ENCODE measurements at regions of chr5 and their contacts with region 1.

Region 1: DNA sequence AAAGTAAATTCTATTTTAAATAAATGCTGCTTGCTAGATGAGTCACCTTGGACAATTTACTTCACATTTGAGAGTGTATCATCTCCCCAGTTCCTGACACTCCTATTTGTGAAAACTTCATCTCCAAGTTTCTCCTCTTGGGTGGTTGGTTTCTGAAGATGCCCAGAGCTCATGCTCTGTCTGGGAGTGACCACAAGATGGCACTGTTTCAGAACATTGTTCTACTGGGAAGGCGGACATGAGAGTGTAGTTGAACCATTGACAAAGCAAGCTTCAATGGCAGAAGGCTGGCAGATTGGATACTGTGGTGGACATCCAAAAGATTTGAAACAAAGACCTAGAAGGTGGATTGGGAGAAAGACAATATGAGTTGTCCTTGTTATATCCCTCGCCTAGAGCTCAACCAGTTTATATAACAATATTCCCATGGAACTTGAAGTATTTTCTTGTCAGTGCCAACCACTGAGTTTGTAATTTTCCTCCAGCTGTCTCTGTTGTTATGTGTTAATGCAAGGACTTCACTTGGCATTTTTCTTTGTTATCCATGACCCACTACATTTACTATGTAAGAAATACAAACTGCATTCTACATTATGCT is 234.3 kb upstream of the ANKH start:
- DNase-seq: no peak
- H3K4me3 ChIP-seq: no peak overlapping the region
- H3K27ac ChIP-seq: no peak overlapping the region
- H3K27me3 ChIP-seq: no peaks in the 10 kb centered on the region
- CTCF ChIP-seq: peak; percentile 82

Region 2: GRCh38 chr5:14706615-14707021 is 399.3 kb before region 1 on chr5:
- CTCF ChIA-PET with region 1: no interaction called
- POLR2A ChIA-PET with region 1: no interaction called
- DNase-seq: no peak
- H3K4me3 ChIP-seq: no peak overlapping the region
- H3K27ac ChIP-seq: peak overlapping the region; percentile 47
- H3K27me3 ChIP-seq: no peaks in the 10 kb centered on the region
- CTCF ChIP-seq: no peak

Region 3: GRCh38 chr5:15117688-15118087 is 11.8 kb after region 1 on chr5:
- CTCF ChIA-PET with region 1: interaction called, 11 read pairs
- POLR2A ChIA-PET with region 1: no interaction called
- DNase-seq: no peak
- H3K4me3 ChIP-seq: no peak overlapping the region
- H3K27ac ChIP-seq: no peak overlapping the region
- H3K27me3 ChIP-seq: no peaks in the 10 kb centered on the region
- CTCF ChIP-seq: no peak

Region 4: GRCh38 chr5:15290953-15291352 is 185.1 kb after region 1 on chr5:
- CTCF ChIA-PET with region 1: no interaction called
- POLR2A ChIA-PET with region 1: no interaction called
- DNase-seq: no peak
- H3K4me3 ChIP-seq: no peak overlapping the region
- H3K27ac ChIP-seq: no peak overlapping the region
- H3K27me3 ChIP-seq: no peaks in the 10 kb centered on the region
- CTCF ChIP-seq: no peak

Region 5: DNA sequence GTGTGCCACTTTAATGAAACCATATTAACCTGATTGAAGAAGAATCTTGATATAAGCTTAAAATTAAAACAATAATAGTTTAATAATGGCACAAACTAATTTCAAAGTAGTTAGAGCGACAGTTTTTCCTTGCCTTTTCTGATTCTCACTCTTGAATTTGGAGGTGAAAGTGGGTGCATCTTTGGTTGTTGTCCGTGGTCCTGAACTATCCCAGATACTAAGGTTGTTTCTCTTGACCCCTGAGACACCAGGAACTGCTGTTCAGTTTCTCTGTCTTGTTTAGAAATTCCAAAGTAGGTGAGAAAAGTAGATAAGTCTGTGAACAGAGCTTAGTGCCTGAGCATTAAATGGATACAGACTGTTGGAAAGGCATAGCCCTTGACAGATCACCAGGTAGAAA is 668.7 kb after region 1 on chr5:
- CTCF ChIA-PET with region 1: interaction called, 11 read pairs
- POLR2A ChIA-PET with region 1: no interaction called
- DNase-seq: no peak
- H3K4me3 ChIP-seq: no peak overlapping the region
- H3K27ac ChIP-seq: no peak overlapping the region
- H3K27me3 ChIP-seq: no peaks in the 10 kb centered on the region
- CTCF ChIP-seq: no peak

Region 6: GRCh38 chr5:15823398-15823797 is 717.5 kb after region 1 on chr5:
- CTCF ChIA-PET with region 1: interaction called, 16 read pairs
- POLR2A ChIA-PET with region 1: no interaction called
- DNase-seq: no peak
- H3K4me3 ChIP-seq: no peak overlapping the region
- H3K27ac ChIP-seq: no peak overlapping the region
- H3K27me3 ChIP-seq: no peaks in the 10 kb centered on the region
- CTCF ChIP-seq: no peak